GM12878 (cell line): ENCODE measurements at regions of chr2 and their contacts with region 1.

Region 1: GRCh38 chr2:112941753-112942658 is 31.0 kb downstream of the IL37 start:
- DNase-seq: peak; percentile 19
- ATAC-seq: peak; percentile 100
- H3K4me3 ChIP-seq: no peak overlapping the region
- H3K27ac ChIP-seq: no peak overlapping the region
- H3K4me1 ChIP-seq: no peaks in the 10 kb centered on the region
- H3K27me3 ChIP-seq: 0 out of 4 replicates have a peak, but pooled peaks cover 0 to 6% of the 10 kb centered on the region in 2 experiments
- CTCF ChIP-seq: peak; percentile 93 to 96 (median 95)
- EP300 ChIP-seq: no peak
- POLR2A ChIP-seq: no peak
- RAD21 ChIP-seq: peak; percentile 96

Region 2: DNA sequence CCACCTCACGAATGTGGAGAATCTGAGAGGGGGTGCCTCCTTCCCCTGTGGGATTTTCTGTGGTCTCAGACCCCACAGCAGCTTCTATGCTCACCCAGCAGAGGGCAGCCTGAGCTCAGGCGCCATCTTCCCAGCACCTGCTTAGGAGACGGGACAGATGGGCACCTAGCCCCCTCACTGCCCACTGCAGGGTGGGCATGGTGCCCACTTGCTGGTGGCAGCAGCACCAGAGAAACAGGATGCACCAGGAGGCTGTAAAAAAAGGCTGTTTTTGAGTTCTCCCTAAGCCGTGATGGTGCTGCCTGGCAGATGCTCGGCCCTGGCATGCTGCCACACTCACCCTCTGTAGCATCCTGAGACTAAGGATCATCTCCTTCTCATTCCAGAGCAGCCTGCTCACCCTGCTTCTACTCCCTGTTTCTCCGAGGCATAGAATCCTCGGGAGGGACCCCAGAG is 315.4 kb before region 1 on chr2:
- CTCF ChIA-PET with region 1: interaction called, 22 read pairs
- POLR2A ChIA-PET with region 1: no interaction called
- RAD21 ChIA-PET with region 1: interaction called, 22 read pairs
- SMC1A ChIA-PET with region 1: interaction called, 9 read pairs
- in situ Hi-C with region 1: no loop called
- intact Hi-C with region 1: no loop called
- DNase-seq: no peak
- ATAC-seq: peak; percentile 86
- H3K4me3 ChIP-seq: no peak overlapping the region
- H3K27ac ChIP-seq: no peak overlapping the region
- H3K4me1 ChIP-seq: peaks cover 19% of the 10 kb centered on the region
- H3K27me3 ChIP-seq: no peaks in the 10 kb centered on the region
- CTCF ChIP-seq: peak; percentile 91 to 95 (median 92)
- EP300 ChIP-seq: no peak
- POLR2A ChIP-seq: no peak
- RAD21 ChIP-seq: peak; percentile 94

Region 3: GRCh38 chr2:112757265-112757664 is 184.7 kb before region 1 on chr2:
- CTCF ChIA-PET with region 1: interaction called, 390 read pairs
- POLR2A ChIA-PET with region 1: no interaction called
- RAD21 ChIA-PET with region 1: interaction called, 227 read pairs
- SMC1A ChIA-PET with region 1: interaction called, 36 read pairs
- in situ Hi-C with region 1: loop called (anchors 5 kb)
- intact Hi-C with region 1: no loop called
- DNase-seq: no peak
- ATAC-seq: no peak
- H3K4me3 ChIP-seq: no peak overlapping the region
- H3K27ac ChIP-seq: no peak overlapping the region
- H3K4me1 ChIP-seq: no peaks in the 10 kb centered on the region
- H3K27me3 ChIP-seq: no peaks in the 10 kb centered on the region
- CTCF ChIP-seq: no peak
- EP300 ChIP-seq: no peak
- POLR2A ChIP-seq: no peak
- RAD21 ChIP-seq: no peak

Region 4: GRCh38 chr2:112836695-112837117 is 105.3 kb before region 1 on chr2 and contains the start of gene IL1B:
- CTCF ChIA-PET with region 1: interaction called, 13 read pairs
- POLR2A ChIA-PET with region 1: no interaction called
- RAD21 ChIA-PET with region 1: interaction called, 3 read pairs
- SMC1A ChIA-PET with region 1: interaction called, 9 read pairs
- in situ Hi-C with region 1: no loop called
- intact Hi-C with region 1: no loop called
- DNase-seq: no peak
- ATAC-seq: peak; percentile 21
- H3K4me3 ChIP-seq: no peak within 1 kb of the TSS
- H3K27ac ChIP-seq: no peak within 1 kb of the TSS
- H3K4me1 ChIP-seq: peaks cover 34% of the 10 kb centered on the region
- H3K27me3 ChIP-seq: no peaks in the 10 kb centered on the region
- CTCF ChIP-seq: no peak
- EP300 ChIP-seq: no peak
- POLR2A ChIP-seq: no peak
- RAD21 ChIP-seq: no peak
- polyA plus RNA-seq, gene IL1B: 0.57 to 1.6 TPM

Region 5: DNA sequence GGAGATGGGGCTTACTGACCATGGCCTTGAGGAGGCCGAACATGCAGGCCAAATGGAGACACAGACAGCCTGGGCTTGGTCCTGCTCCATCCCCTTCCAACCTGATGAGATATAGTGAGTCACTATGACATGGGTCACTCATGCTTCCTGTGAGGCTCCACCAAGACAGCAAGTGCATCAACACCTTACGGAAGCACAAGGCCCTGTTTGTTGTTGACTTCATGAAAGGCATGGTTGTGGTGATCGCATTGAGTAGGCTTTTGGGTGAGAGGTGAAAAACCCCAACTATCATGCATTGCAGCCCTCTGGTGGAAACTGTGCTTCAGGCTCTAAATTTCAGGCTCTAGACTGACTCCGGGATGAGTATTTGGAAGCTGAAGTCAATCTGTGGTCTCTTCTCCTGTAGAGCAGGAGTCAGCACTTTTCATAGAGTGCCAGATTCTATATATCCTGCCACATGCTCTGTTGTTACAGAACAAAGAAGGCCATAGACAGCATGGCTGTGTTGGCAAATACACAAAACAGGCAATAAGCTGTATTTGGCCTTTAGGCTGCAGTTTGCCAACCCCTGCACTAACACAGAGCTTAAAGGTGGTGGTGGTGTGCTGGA is 21.0 kb before region 1 on chr2:
- CTCF ChIA-PET with region 1: interaction called, 47 read pairs
- POLR2A ChIA-PET with region 1: no interaction called
- RAD21 ChIA-PET with region 1: interaction called, 16 read pairs
- SMC1A ChIA-PET with region 1: interaction called, 11 read pairs
- in situ Hi-C with region 1: no loop called
- intact Hi-C with region 1: no loop called
- DNase-seq: no peak
- ATAC-seq: no peak
- H3K4me3 ChIP-seq: no peak overlapping the region
- H3K27ac ChIP-seq: no peak overlapping the region
- H3K4me1 ChIP-seq: peaks cover 5% of the 10 kb centered on the region
- H3K27me3 ChIP-seq: peaks cover 2 to 3% of the 10 kb centered on the region in 2 experiments; a peak in 2 of 4 replicates
- CTCF ChIP-seq: no peak
- EP300 ChIP-seq: no peak
- POLR2A ChIP-seq: no peak
- RAD21 ChIP-seq: no peak

Region 6: GRCh38 chr2:113025737-113026136 is 83.7 kb after region 1 on chr2:
- CTCF ChIA-PET with region 1: no interaction called
- POLR2A ChIA-PET with region 1: no interaction called
- RAD21 ChIA-PET with region 1: no interaction called
- SMC1A ChIA-PET with region 1: no interaction called
- in situ Hi-C with region 1: no loop called
- intact Hi-C with region 1: no loop called
- DNase-seq: no peak
- ATAC-seq: no peak
- H3K4me3 ChIP-seq: no peak overlapping the region
- H3K27ac ChIP-seq: no peak overlapping the region
- H3K4me1 ChIP-seq: no peaks in the 10 kb centered on the region
- H3K27me3 ChIP-seq: peaks cover 2 to 3% of the 10 kb centered on the region in 2 experiments; a peak in 3 of 4 replicates
- CTCF ChIP-seq: no peak
- EP300 ChIP-seq: no peak
- POLR2A ChIP-seq: no peak
- RAD21 ChIP-seq: no peak

Region 7: GRCh38 chr2:113050921-113051895 is 109.2 kb after region 1 on chr2:
- CTCF ChIA-PET with region 1: no interaction called
- POLR2A ChIA-PET with region 1: no interaction called
- RAD21 ChIA-PET with region 1: no interaction called
- SMC1A ChIA-PET with region 1: no interaction called
- in situ Hi-C with region 1: no loop called
- intact Hi-C with region 1: no loop called
- DNase-seq: no peak
- ATAC-seq: no peak
- H3K4me3 ChIP-seq: no peak overlapping the region
- H3K27ac ChIP-seq: no peak overlapping the region
- H3K4me1 ChIP-seq: no peaks in the 10 kb centered on the region
- H3K27me3 ChIP-seq: no peaks in the 10 kb centered on the region; a peak in 1 of 4 replicates
- CTCF ChIP-seq: no peak
- EP300 ChIP-seq: no peak
- POLR2A ChIP-seq: no peak
- RAD21 ChIP-seq: no peak